ENCODE measurements at regions of chr1 and their contacts with region 1.

Region 1: DNA sequence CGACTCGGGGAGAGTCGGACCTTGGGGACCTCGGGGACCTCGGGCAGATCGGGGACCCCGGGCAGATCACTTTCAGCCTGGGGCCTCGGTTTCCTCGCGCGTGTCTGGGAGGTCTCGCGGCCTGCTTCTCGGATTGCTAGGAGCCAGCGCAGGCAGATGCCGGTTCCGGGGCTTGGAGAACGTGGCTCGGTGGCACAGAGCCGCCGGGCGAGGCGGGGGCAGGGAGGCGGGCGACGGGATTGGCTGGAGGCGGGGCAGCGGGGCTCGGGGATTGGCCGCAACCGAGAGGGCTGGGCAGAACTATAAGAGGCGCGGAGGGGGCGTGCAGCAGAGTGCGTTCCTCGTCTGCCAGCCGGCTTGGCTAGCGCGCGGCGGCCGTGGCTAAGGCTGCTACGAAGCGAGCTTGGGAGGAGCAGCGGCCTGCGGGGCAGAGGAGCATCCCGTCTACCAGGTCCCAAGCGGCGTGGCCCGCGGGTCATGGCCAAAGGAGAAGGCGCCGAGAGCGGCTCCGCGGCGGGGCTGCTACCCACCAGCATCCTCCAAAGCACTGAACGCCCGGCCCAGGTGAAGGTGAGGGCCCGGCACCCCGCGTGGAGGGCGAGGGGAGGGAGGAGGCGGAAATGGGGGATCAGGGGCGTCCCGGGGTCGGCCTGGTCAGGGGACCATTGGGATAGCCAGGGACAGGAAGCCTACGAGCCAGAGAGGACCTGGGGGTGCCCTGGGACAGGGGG is at the start of gene MFSD2A:
- DNase-seq: peak; percentile 92
- H3K4me3 ChIP-seq: peak within 1 kb of the TSS; percentile 74 to 78 (median 75)
- H3K27ac ChIP-seq: peak within 1 kb of the TSS; percentile 78
- H3K4me1 ChIP-seq: peaks cover 47% of the 10 kb centered on the region
- H3K27me3 ChIP-seq: no peaks in the 10 kb centered on the region
- CTCF ChIP-seq: no peak
- total RNA-seq, gene MFSD2A: 14.3 to 54.0 TPM

Region 2: GRCh38 chr1:39799770-39800470 is 155.1 kb before region 1 on chr1:
- CTCF ChIA-PET with region 1: no interaction called
- dilution Hi-C with region 1: no loop called
- in situ Hi-C with region 1: no loop called
- intact Hi-C with region 1: no loop called
- DNase-seq: peak; percentile 82
- H3K4me3 ChIP-seq: no peak overlapping the region
- H3K27ac ChIP-seq: peak overlapping the region; percentile 43
- H3K4me1 ChIP-seq: peaks cover 14% of the 10 kb centered on the region
- H3K27me3 ChIP-seq: no peaks in the 10 kb centered on the region
- CTCF ChIP-seq: peak; percentile 72 to 81

Region 3: GRCh38 chr1:39907528-39908453 is 47.2 kb before region 1 on chr1:
- CTCF ChIA-PET with region 1: no interaction called
- dilution Hi-C with region 1: no loop called
- in situ Hi-C with region 1: no loop called
- intact Hi-C with region 1: no loop called
- DNase-seq: no peak
- H3K4me3 ChIP-seq: no peak overlapping the region
- H3K27ac ChIP-seq: no peak overlapping the region
- H3K4me1 ChIP-seq: no peaks in the 10 kb centered on the region
- H3K27me3 ChIP-seq: no peaks in the 10 kb centered on the region
- CTCF ChIP-seq: no peak

Region 4: GRCh38 chr1:39933956-39934941 is 20.7 kb before region 1 on chr1:
- CTCF ChIA-PET with region 1: interaction called, 7 read pairs
- dilution Hi-C with region 1: no loop called
- in situ Hi-C with region 1: no loop called
- intact Hi-C with region 1: loop called (anchors 1 kb)
- DNase-seq: peak; percentile 97
- H3K4me3 ChIP-seq: no peak overlapping the region
- H3K27ac ChIP-seq: peak overlapping the region; percentile 63
- H3K4me1 ChIP-seq: peaks cover 18% of the 10 kb centered on the region
- H3K27me3 ChIP-seq: no peaks in the 10 kb centered on the region
- CTCF ChIP-seq: no peak

Region 5: DNA sequence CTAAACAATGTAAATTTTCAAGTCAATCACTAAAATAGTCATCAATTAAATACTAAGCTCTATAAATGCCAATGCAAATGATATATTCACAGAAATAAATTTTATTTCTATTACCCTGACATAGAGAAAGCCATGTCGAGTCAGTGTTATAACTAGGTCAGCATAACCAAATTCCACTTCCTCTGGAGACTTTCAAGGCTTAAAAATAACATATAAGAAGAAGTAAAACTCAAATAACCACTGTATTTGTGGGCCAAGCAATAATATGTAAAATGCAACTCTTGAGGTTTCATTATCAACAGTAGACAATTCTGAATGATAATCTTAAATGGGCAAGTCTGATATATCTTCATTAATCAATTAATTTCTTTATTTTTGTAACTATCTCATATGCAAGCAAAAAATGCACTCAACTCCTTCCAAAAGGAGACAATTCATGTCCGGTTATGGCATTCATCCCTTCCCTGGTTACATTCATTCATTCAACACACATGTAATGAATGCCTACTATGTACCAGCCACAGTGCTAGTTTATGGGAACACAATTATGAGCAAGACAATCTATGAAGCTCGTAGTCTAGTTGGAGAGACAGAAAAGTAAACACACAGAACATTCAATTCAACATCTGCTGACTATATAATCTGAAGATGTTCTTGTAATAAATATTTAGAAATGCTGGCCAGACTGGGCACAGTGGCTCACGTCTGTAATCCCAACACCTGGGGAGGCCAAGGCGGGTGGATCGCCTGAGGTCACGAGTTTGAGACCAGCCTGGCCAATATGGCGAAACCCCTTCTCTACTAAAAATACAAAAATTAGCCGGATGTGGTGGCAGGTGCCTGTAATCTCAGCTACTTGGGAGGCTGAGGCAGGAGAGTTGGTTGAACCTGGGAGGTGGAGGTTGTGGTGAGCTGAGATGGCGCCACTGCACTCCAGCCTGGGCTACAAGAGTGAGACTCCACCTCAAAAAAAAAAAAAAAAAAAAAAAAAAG is 48.5 kb after region 1 on chr1:
- CTCF ChIA-PET with region 1: no interaction called
- dilution Hi-C with region 1: no loop called
- in situ Hi-C with region 1: no loop called
- intact Hi-C with region 1: no loop called
- DNase-seq: no peak
- H3K4me3 ChIP-seq: no peak overlapping the region
- H3K27ac ChIP-seq: no peak overlapping the region
- H3K4me1 ChIP-seq: peaks cover 15% of the 10 kb centered on the region
- H3K27me3 ChIP-seq: no peaks in the 10 kb centered on the region
- CTCF ChIP-seq: no peak

Measured in mammary epithelial cell (primary cell).